CD14-positive monocyte (primary cell): ENCODE measurements at regions of chr3 and their contacts with region 1.

Region 1: GRCh38 chr3:4978204-4978965 is 852 bp upstream of the BHLHE40 start:
- DNase-seq: peak; percentile 94 to 98 (median 97)
- H3K4me3 ChIP-seq: peak overlapping the region; percentile 50 to 99 (median 75)
- H3K4me3 Mint-ChIP-seq: peak overlapping the region; percentile 99 to 100
- H3K27ac ChIP-seq: peak overlapping the region; percentile 100
- H3K27ac Mint-ChIP-seq: peak overlapping the region; percentile 100
- H3K4me1 ChIP-seq: peaks cover 55% of the 10 kb centered on the region in 2 donors
- H3K4me1 Mint-ChIP-seq: peaks cover 44% of the 10 kb centered on the region
- H3K27me3 ChIP-seq: no peaks in the 10 kb centered on the region
- H3K27me3 Mint-ChIP-seq: peaks cover 0 to 3% (median 2%) of the 10 kb centered on the region in 3 donors
- CTCF ChIP-seq: no peak

Region 2: GRCh38 chr3:4462369-4463040 is 515.9 kb before region 1 on chr3:
- intact Hi-C with region 1: no loop called
- DNase-seq: peak in 1 of 3 donors; percentile 32
- H3K4me3 ChIP-seq: peak overlapping the region in 2 of 3 experiments; percentile 10 to 40
- H3K4me3 Mint-ChIP-seq: peak overlapping the region; percentile 51 to 64
- H3K27ac ChIP-seq: peak overlapping the region; percentile 33 to 68
- H3K27ac Mint-ChIP-seq: peak overlapping the region; percentile 61 to 86 (median 82)
- H3K4me1 ChIP-seq: peaks cover 31 to 45% of the 10 kb centered on the region in 2 donors
- H3K4me1 Mint-ChIP-seq: peaks cover 49% of the 10 kb centered on the region
- H3K27me3 ChIP-seq: no peaks in the 10 kb centered on the region
- H3K27me3 Mint-ChIP-seq: peaks cover 0 to 2% (median 0%) of the 10 kb centered on the region in 3 donors
- CTCF ChIP-seq: no peak

Region 3: DNA sequence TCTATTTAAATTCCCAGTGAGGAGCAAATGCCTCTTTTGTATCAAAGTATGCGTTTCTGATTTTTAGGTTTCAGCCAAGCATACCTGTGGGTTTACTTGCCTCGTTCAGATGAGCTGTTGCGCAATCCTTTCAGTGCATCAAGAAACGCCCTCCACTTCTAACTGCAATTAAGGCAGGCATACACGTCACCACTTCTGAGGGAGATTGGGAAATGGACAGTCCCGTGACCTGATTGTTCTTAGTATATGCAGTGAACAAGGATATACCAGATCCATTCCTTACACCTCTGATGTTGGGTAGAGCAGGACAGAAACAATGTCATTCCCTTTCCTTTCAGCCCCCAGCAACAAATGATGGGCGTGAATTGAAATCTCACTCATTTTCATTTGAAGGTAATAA is 266.2 kb before region 1 on chr3:
- intact Hi-C with region 1: loop called in 1 of 2 experiments (anchors 5 kb)
- DNase-seq: peak; percentile 69 to 89 (median 87)
- H3K4me3 ChIP-seq: no peak overlapping the region
- H3K4me3 Mint-ChIP-seq: no peak overlapping the region
- H3K27ac ChIP-seq: peak overlapping the region in 1 of 2 donors; percentile 60
- H3K27ac Mint-ChIP-seq: peak overlapping the region; percentile 34 to 87 (median 60)
- H3K4me1 ChIP-seq: peaks cover 11 to 12% of the 10 kb centered on the region in 2 donors
- H3K4me1 Mint-ChIP-seq: peaks cover 13% of the 10 kb centered on the region
- H3K27me3 ChIP-seq: no peaks in the 10 kb centered on the region
- H3K27me3 Mint-ChIP-seq: no peaks in the 10 kb centered on the region
- CTCF ChIP-seq: no peak

Region 4: GRCh38 chr3:4751502-4752101 is 226.8 kb before region 1 on chr3:
- intact Hi-C with region 1: loop called in 1 of 2 experiments (anchors 10 kb)
- DNase-seq: peak; percentile 58 to 92 (median 85)
- H3K4me3 ChIP-seq: peak overlapping the region; percentile 9 to 67 (median 30)
- H3K4me3 Mint-ChIP-seq: peak overlapping the region; percentile 66 to 77
- H3K27ac ChIP-seq: peak overlapping the region; percentile 78 to 95
- H3K27ac Mint-ChIP-seq: peak overlapping the region; percentile 92 to 99 (median 96)
- H3K4me1 ChIP-seq: peaks cover 70 to 75% of the 10 kb centered on the region in 2 donors
- H3K4me1 Mint-ChIP-seq: peaks cover 87% of the 10 kb centered on the region
- H3K27me3 ChIP-seq: no peaks in the 10 kb centered on the region
- H3K27me3 Mint-ChIP-seq: peaks cover 0 to 3% (median 3%) of the 10 kb centered on the region in 3 donors
- CTCF ChIP-seq: no peak

Region 5: DNA sequence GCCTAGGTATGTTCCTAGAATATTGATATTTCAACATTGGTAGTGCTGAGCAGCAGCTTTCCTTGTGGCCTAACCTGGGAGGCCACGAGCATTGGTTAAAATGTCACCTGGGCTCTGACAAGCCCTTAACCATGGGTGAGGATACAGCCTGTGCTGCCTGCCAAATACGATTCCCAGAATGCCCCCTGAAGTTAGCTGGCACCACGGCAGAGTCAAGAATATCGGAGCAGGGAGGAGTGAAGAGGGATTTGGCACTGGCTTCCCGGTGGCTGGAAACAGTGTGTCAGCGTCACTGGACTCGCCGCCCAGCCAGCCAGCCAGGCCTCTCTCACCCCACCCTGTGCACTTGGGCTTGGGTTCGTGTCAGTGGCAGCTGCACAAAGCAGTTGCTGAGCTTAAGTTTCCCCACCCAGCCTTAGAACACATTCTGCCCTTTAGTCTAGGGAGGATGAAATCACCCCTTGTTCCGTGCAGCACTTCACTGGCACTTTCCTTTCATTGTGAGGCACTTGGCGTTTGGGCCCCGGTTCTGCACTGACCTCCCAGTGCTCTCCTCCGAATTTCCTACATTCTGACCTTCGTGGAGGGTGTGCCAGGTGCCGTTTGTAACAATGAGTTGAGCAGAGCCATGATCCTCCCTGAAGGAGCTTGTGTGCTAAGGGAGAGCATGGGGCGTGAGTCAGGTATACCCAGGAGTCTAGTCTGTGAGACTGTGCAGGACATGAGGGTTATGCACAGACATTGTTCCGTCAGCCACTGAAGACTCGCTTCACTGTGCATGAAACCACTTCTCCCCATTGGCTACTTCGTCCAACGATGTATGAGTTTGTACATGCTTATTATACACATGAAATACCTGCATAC is 151.9 kb before region 1 on chr3:
- intact Hi-C with region 1: loop called in 1 of 2 experiments (anchors 5 kb)
- DNase-seq: no peak
- H3K4me3 ChIP-seq: peak overlapping the region in 1 of 3 experiments; percentile 12
- H3K4me3 Mint-ChIP-seq: peak overlapping the region in 1 of 2 donors; percentile 60
- H3K27ac ChIP-seq: no peak overlapping the region
- H3K27ac Mint-ChIP-seq: peak overlapping the region in 5 of 7 donors; percentile 5 to 84 (median 72)
- H3K4me1 ChIP-seq: peaks cover 52 to 65% of the 10 kb centered on the region in 2 donors
- H3K4me1 Mint-ChIP-seq: peaks cover 69% of the 10 kb centered on the region
- H3K27me3 ChIP-seq: no peaks in the 10 kb centered on the region
- H3K27me3 Mint-ChIP-seq: peaks cover 3 to 4% (median 4%) of the 10 kb centered on the region in 3 donors
- CTCF ChIP-seq: no peak

Region 6: DNA sequence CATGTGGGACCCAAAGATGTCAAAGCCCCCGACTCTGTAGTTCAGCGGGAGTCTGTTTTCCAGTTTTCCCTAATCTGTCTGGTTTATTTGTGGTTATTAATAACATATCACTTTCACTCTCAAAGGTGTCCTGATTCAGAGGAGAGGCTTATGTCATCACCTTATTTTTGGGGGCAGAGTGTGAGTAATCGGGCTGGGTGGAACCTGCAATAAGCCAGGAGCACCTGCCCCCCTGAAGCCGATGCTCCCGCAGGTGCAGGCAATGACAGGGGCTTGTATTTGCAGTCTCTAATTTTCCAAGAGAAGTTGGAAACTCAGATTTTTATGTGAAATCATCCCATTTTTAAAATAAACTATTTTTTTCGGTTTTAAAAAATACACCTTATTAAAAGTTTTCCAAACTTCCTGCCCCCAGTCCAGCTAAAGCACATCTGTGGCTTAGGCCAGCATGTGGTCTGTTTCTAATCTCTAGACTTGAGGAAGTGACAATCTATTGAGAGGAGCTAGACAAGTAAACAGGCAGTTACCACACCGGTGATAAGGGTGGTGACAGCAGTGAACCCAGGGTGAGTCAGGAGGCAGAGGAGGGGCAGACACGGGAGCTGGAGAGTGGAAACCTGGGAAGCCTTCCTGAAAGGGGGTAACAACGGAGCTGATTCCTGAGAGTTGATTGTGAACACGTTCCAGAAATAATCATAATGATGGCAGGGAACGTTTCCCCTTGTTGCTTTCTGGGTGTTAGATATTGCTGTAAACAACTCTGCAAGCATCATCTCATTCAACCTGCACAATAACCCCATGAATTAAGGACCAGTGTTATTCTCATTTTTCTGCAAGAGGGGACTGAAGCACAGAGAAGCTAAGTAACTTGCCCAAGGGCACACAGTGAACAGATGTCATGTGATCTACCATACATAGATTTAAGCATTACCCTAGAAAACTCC is 38.1 kb after region 1 on chr3:
- intact Hi-C with region 1: loop called (anchors 2 to 5 kb)
- DNase-seq: peak; percentile 66 to 84 (median 79)
- H3K4me3 ChIP-seq: no peak overlapping the region
- H3K4me3 Mint-ChIP-seq: peak overlapping the region in 1 of 2 donors; percentile 54
- H3K27ac ChIP-seq: peak overlapping the region; percentile 10 to 70
- H3K27ac Mint-ChIP-seq: peak overlapping the region; percentile 9 to 95 (median 87)
- H3K4me1 ChIP-seq: peaks cover 73 to 83% of the 10 kb centered on the region in 2 donors
- H3K4me1 Mint-ChIP-seq: peaks cover 90% of the 10 kb centered on the region
- H3K27me3 ChIP-seq: no peaks in the 10 kb centered on the region
- H3K27me3 Mint-ChIP-seq: peaks cover 0 to 2% (median 0%) of the 10 kb centered on the region in 3 donors
- CTCF ChIP-seq: no peak

Region 7: GRCh38 chr3:5026331-5027218 is 48.2 kb after region 1 on chr3:
- intact Hi-C with region 1: loop called in 1 of 2 experiments (anchors 2 kb)
- DNase-seq: peak; percentile 85 to 89 (median 87)
- H3K4me3 ChIP-seq: peak overlapping the region; percentile 24 to 72 (median 28)
- H3K4me3 Mint-ChIP-seq: peak overlapping the region; percentile 85 to 89
- H3K27ac ChIP-seq: peak overlapping the region in 1 of 2 donors; percentile 56
- H3K27ac Mint-ChIP-seq: peak overlapping the region in 6 of 7 donors; percentile 83 to 92 (median 90)
- H3K4me1 ChIP-seq: peaks cover 19 to 25% of the 10 kb centered on the region in 2 donors
- H3K4me1 Mint-ChIP-seq: peaks cover 26% of the 10 kb centered on the region
- H3K27me3 ChIP-seq: no peaks in the 10 kb centered on the region
- H3K27me3 Mint-ChIP-seq: peaks cover 1 to 8% (median 6%) of the 10 kb centered on the region in 3 donors
- CTCF ChIP-seq: peak; percentile 73

Region 8: DNA sequence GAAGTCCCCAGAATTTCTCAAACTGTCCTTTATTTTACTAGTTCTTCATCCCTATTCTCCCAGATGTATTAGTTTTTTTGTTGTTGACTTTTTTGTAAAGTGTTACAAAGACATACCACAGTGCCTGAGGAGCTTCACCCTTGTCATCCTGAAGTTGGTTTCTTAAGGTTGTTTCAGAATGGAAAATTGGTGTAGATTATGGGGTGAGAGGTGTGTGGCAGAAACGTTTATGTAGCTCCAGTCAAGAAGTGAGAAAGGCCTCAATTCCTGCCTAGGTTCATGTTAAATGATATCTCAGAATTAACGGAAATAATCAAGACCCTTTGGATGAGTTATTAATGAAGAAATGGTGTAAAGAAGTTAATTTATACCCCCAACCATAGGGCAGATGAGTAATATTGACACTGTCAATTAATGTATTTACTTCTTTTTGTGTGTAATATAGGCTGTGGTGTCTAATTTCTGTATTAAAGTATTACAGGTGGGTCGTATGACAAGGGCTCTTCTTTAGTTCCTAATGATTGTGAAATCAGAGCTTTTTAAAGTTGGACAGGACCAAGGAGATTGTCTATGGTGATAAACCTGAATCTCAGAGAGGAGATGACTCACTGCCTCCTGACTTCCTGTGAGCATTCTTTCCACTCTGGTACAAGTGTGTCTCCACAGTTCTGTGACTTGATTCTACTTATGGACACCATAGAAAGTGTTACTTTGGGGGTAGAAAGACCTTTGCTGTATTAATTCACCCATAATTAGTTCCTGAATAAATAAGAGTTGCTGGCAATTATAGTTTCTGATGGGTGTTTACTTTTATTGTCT is 216.2 kb after region 1 on chr3:
- intact Hi-C with region 1: loop called in 1 of 2 experiments (anchors 5 kb)
- DNase-seq: peak; percentile 76 to 95 (median 94)
- H3K4me3 ChIP-seq: peak overlapping the region in 1 of 3 experiments; percentile 31
- H3K4me3 Mint-ChIP-seq: no peak overlapping the region
- H3K27ac ChIP-seq: peak overlapping the region in 1 of 2 donors; percentile 88
- H3K27ac Mint-ChIP-seq: peak overlapping the region; percentile 93 to 97 (median 95)
- H3K4me1 ChIP-seq: peaks cover 86 to 97% of the 10 kb centered on the region in 2 donors
- H3K4me1 Mint-ChIP-seq: peaks cover 88% of the 10 kb centered on the region
- H3K27me3 ChIP-seq: no peaks in the 10 kb centered on the region
- H3K27me3 Mint-ChIP-seq: no peaks in the 10 kb centered on the region
- CTCF ChIP-seq: no peak